Prostate gland (tissue), 2 donors: ENCODE measurements at regions of chr16 and their contacts with region 1.

Region 1: GRCh38 chr16:25051406-25052150 is 36.4 kb upstream of the ARHGAP17 start:
- DNase-seq: no peak
- H3K4me3 ChIP-seq: no peak overlapping the region
- H3K27ac ChIP-seq: no peak overlapping the region
- H3K4me1 ChIP-seq: peaks cover 11% of the 10 kb centered on the region
- H3K27me3 ChIP-seq: no peaks in the 10 kb centered on the region
- CTCF ChIP-seq: no peak
- POLR2A ChIP-seq: no peak

Region 2: DNA sequence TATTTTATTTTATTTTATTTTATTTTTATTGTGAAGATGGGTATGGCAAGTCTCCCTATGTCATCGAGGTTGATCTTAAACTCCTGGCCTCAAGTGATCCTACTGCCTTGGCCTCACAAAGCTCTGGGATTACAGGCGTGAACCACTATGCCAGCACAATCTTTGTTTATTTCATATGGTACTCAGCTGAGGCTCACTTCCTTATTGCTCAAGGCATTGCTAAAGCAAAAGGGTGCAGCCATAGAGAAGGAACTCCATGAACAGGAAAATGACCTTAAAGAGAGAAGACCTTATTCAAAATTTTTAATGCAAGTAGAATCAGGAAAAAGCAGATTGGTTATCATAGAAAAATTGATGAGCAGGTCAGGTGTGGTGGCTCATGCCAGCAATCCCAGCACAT is 622.8 kb before region 1 on chr16:
- intact Hi-C with region 1: no loop called
- DNase-seq: no peak
- H3K4me3 ChIP-seq: no peak overlapping the region
- H3K27ac ChIP-seq: no peak overlapping the region
- H3K4me1 ChIP-seq: no peaks in the 10 kb centered on the region
- H3K27me3 ChIP-seq: no peaks in the 10 kb centered on the region
- CTCF ChIP-seq: no peak
- POLR2A ChIP-seq: no peak

Region 3: GRCh38 chr16:25126820-25127232 is 75.2 kb after region 1 on chr16:
- intact Hi-C with region 1: loop called (anchors 2 kb)
- DNase-seq: no peak
- H3K4me3 ChIP-seq: no peak overlapping the region
- H3K27ac ChIP-seq: no peak overlapping the region
- H3K4me1 ChIP-seq: no peaks in the 10 kb centered on the region
- H3K27me3 ChIP-seq: no peaks in the 10 kb centered on the region
- CTCF ChIP-seq: peak in 3 of 4 experiments; percentile 28 to 50 (median 45)
- POLR2A ChIP-seq: no peak